Left cardiac atrium (tissue), 4 donors: ENCODE measurements at regions of chr5 and their contacts with region 1.

Region 1: GRCh38 chr5:148682058-148683026 is 28.0 kb upstream of the HTR4 start:
- DNase-seq: no peak
- ATAC-seq: no peak

Region 2: DNA sequence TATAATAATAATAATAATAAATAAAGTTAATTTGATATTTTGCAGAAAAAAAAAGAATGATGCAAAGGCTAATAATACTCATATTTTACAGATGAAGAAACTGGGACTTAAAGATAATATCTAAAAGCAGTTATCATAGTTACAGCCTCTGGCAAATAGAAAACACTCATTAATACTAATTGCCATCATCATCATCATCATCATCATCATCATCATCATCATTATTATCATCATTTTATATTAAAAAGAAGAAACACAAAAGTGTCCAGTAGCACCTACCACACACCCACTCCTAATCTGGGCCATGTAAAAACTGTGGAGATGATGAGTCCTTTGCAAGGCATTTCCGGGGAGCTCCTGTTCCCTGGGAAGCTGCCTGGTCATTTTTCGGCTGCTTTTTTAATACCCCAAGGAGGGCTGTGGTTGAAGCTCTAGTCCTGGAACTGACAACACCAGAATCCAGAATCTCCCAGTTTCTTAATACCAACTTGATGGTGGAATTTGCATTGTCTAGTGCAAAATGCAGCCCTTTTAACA is 98.8 kb before region 1 on chr5:
- intact Hi-C with region 1: no loop called
- DNase-seq: no peak
- ATAC-seq: no peak

Region 3: DNA sequence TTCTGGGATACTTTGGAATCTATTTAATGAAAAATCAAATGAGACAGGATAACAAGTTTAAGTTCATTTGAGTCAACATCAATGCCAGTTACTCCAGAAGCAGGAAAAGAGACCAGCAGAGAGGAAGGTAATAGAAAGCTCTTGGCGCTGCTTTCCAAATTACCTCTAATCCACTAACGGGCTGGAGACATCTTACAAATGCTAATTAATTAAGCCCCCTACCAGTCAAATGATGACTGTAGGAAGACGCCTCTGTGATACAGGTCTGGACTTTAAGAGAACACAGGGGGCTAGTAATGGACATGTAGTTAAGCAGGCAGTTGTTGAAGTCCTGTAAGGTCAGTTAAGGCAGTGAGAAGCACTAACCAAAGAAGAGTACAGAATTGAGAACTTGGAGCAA is 37.3 kb after region 1 on chr5:
- intact Hi-C with region 1: loop called in 1 of 2 experiments (anchors 1 kb)
- DNase-seq: no peak
- ATAC-seq: no peak